Sigmoid colon (tissue), 7 donors: ENCODE measurements at regions of chr2 and their contacts with region 1.

Region 1: GRCh38 chr2:181466661-181467576 is 9.7 kb downstream of the ITGA4 start:
- DNase-seq: peak; percentile 68
- H3K4me3 ChIP-seq: no peak overlapping the region
- H3K27ac ChIP-seq: no peak overlapping the region
- H3K4me1 ChIP-seq: no peaks in the 10 kb centered on the region
- H3K27me3 ChIP-seq: no peaks in the 10 kb centered on the region
- CTCF ChIP-seq: peak in 3 of 4 experiments; percentile 41 to 65 (median 47)
- EP300 ChIP-seq: no peak
- POLR2A ChIP-seq: no peak

Region 2: DNA sequence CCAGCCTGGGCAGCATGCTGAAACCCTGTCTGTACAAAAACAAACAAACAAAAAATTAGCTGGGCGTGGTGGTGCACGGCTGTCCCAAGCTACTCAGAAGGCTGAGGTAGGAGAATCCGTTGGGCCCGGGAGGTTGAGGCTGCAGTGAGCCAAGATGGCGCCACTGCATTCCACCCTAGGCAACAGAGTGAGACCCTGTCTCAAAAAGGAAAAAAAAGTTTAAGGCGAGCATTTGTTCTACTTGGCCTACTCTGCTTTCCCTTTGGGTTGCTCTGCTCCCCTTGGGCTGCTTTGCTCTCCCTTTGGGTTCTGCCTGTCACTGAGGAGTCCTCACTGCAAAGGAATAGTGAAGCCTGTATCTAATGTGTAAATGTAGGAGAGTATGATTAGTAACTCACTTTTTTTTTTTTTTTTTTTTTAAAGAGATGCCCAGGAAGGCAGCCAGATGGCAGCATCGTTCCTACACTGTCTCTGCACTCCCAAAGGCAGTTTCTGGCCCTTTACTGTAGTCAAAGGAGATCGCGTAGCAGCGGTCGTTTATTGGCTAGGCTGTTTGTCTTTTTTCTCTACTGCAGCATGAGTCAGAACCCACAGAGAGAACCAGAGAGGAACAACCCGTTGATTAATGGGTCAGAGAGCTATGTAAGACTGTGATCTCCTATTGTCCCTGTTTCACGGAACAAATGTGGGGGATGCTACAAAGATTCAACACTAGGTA is 1341.5 kb before region 1 on chr2:
- intact Hi-C with region 1: loop called (anchors 2 kb)
- DNase-seq: peak; percentile 84
- H3K4me3 ChIP-seq: no peak overlapping the region
- H3K27ac ChIP-seq: no peak overlapping the region
- H3K4me1 ChIP-seq: peaks cover 0 to 18% (median 9%) of the 10 kb centered on the region in 4 donors
- H3K27me3 ChIP-seq: no peaks in the 10 kb centered on the region
- CTCF ChIP-seq: peak in 3 of 4 experiments; percentile 33 to 49 (median 42)
- EP300 ChIP-seq: no peak
- POLR2A ChIP-seq: no peak

Region 3: DNA sequence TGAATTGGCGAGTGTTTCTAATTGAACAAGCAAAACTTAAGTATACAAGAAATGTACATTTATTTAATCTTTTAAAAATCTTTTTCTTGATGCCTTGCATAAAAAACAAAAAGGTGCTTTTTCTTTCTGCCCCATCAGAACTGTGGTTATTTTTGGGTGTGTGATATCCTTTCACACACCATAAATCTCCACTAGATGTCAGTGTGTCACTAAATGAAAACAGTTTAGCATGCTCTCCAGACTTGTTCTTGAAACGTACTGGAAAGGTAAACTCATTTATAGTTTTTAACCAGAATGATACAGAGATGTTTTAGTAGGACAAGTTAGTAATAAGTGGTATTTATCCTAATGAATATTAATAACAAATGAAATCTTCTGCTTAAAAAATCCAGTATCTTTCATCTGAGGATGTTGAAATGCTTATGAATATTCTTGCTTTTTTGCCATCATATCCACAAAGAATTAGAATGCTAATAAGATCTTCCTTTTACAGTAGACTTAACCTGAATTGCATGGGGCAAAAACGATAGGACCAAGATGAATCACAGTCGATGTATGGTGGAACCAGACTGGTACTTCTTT is 389.7 kb before region 1 on chr2:
- intact Hi-C with region 1: loop called (anchors 10 kb)
- DNase-seq: no peak
- H3K4me3 ChIP-seq: no peak overlapping the region
- H3K27ac ChIP-seq: no peak overlapping the region
- H3K4me1 ChIP-seq: no peaks in the 10 kb centered on the region
- H3K27me3 ChIP-seq: no peaks in the 10 kb centered on the region
- CTCF ChIP-seq: peak in 1 of 4 experiments; percentile 56
- EP300 ChIP-seq: no peak
- POLR2A ChIP-seq: no peak

Region 4: GRCh38 chr2:181104512-181105115 is 362.3 kb before region 1 on chr2:
- intact Hi-C with region 1: loop called (anchors 10 kb)
- DNase-seq: no peak
- H3K4me3 ChIP-seq: no peak overlapping the region
- H3K27ac ChIP-seq: no peak overlapping the region
- H3K4me1 ChIP-seq: no peaks in the 10 kb centered on the region
- H3K27me3 ChIP-seq: no peaks in the 10 kb centered on the region
- CTCF ChIP-seq: peak in 3 of 4 experiments; percentile 15 to 40 (median 27)
- EP300 ChIP-seq: no peak
- POLR2A ChIP-seq: no peak

Region 5: GRCh38 chr2:181715033-181715630 is 248.2 kb after region 1 on chr2:
- intact Hi-C with region 1: loop called (anchors 10 kb)
- DNase-seq: peak; percentile 69
- H3K4me3 ChIP-seq: no peak overlapping the region
- H3K27ac ChIP-seq: no peak overlapping the region
- H3K4me1 ChIP-seq: no peaks in the 10 kb centered on the region
- H3K27me3 ChIP-seq: no peaks in the 10 kb centered on the region
- CTCF ChIP-seq: peak; percentile 4 to 44 (median 32)
- EP300 ChIP-seq: no peak
- POLR2A ChIP-seq: no peak